ENCODE measurements at regions of chr9 and their contacts with region 1.

Region 1: DNA sequence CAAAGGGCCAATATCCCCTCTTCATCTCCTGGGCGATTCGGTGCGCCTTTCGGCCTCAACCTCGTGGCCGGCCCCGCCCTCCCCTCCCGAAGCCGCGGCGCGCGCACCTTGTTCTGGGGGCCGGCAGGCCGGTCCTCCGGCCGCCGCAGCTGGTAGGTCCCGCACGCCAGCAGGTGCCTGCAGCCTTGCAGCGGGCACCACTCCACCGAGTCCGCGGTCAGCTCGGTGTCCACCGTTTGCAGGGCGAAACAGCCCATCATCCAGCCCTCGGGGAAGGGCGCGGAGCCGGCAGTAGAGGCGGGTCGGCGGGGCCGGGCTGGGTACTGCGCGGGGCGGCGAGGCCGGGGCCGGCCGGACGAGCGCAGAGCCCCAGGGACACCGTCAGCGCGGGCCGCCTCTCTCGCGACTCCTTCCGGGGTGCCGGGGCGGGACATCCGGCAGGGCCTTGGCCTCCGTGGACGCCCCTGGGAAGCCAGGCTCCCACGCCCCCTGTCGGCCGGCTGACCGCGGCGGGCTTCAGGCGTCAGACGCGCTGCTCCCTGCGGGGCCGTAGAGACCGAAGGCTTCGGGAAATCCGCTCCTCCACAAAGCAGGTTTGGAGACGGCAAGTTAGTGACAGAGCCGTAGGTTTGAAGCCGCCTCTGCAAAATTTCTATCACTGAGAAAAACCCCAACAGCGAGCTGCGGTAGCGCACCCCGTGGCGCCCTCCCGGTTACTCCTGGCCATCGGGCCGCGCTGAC is at the start of gene DPH7:
- DNase-seq: peak; percentile 91 to 93
- ATAC-seq: peak; percentile 96 to 98
- H3K4me3 ChIP-seq: peak within 1 kb of the TSS; percentile 72
- H3K27ac ChIP-seq: peak within 1 kb of the TSS; percentile 91 to 97
- H3K4me1 ChIP-seq: peaks cover 12% of the 10 kb centered on the region; the same call in 2 of the 3 replicates
- CTCF ChIP-seq: peak; percentile 85
- EP300 ChIP-seq: no peak
- POLR2A ChIP-seq: peak; percentile 78
- RAD21 ChIP-seq: peak; percentile 14 to 36; a peak in 3 of 5 replicates
- polyA plus RNA-seq, gene DPH7: 26.7 and 28.2 TPM in 2 replicates

Region 2: GRCh38 chr9:137551651-137552384 is 26.9 kb before region 1 on chr9 and contains the start of gene MRPL41:
- CTCF ChIA-PET with region 1: interaction called, 14 read pairs
- POLR2A ChIA-PET with region 1: interaction called, 3 read pairs
- DNase-seq: peak; percentile 87 to 92
- ATAC-seq: peak; percentile 81 to 86
- H3K4me3 ChIP-seq: peak within 1 kb of the TSS; percentile 77
- H3K27ac ChIP-seq: peak within 1 kb of the TSS; percentile 93 to 96
- H3K4me1 ChIP-seq: peaks cover 15% of the 10 kb centered on the region
- CTCF ChIP-seq: no peak
- EP300 ChIP-seq: no peak
- POLR2A ChIP-seq: peak; percentile 78
- RAD21 ChIP-seq: no peak
- polyA plus RNA-seq, gene MRPL41: 19.2 and 19.7 TPM in 2 replicates

Region 3: DNA sequence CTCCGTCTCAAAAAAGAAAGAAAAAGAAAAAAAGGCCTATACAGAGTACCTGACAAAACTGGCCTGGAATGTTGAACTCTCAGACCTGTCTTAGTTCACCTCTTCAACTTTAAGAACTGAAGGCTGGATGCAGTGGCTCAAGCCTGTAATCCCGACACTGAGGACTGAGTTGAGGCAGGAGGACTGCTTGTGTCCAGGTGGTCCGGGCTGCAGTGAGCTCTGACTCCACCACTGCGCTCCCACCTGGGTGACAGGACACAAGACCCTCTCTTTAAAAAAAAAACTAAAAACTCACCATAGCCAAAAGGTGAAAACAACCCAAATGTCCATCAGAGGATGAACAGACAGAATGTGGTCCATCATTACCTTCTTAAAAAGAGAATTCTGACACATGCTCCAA is 20.6 kb before region 1 on chr9:
- CTCF ChIA-PET with region 1: interaction called, 14 read pairs
- POLR2A ChIA-PET with region 1: interaction called, 4 read pairs
- DNase-seq: no peak
- ATAC-seq: no peak
- H3K4me3 ChIP-seq: no peak overlapping the region
- H3K27ac ChIP-seq: no peak overlapping the region
- H3K4me1 ChIP-seq: peaks cover 3% of the 10 kb centered on the region; the same call in 2 of the 3 replicates
- CTCF ChIP-seq: no peak
- EP300 ChIP-seq: no peak
- POLR2A ChIP-seq: no peak
- RAD21 ChIP-seq: no peak

Region 4: GRCh38 chr9:137564817-137565411 is 13.8 kb before region 1 on chr9:
- CTCF ChIA-PET with region 1: interaction called, 11 read pairs
- POLR2A ChIA-PET with region 1: interaction called, 4 read pairs
- DNase-seq: no peak
- ATAC-seq: peak in 1 of 2 experiments; percentile 54; a peak in 2 of 6 replicates
- H3K4me3 ChIP-seq: no peak overlapping the region
- H3K27ac ChIP-seq: no peak overlapping the region
- H3K4me1 ChIP-seq: no peaks in the 10 kb centered on the region
- CTCF ChIP-seq: no peak
- EP300 ChIP-seq: no peak
- POLR2A ChIP-seq: no peak
- RAD21 ChIP-seq: no peak

Region 5: GRCh38 chr9:137590462-137591383 is 12.0 kb after region 1 on chr9 and contains the start of gene ZMYND19:
- CTCF ChIA-PET with region 1: interaction called, 175 read pairs
- POLR2A ChIA-PET with region 1: interaction called, 9 read pairs
- DNase-seq: peak; percentile 85 to 94
- ATAC-seq: peak; percentile 87 to 93
- H3K4me3 ChIP-seq: peak within 1 kb of the TSS; percentile 99
- H3K27ac ChIP-seq: peak within 1 kb of the TSS; percentile 94 to 95
- H3K4me1 ChIP-seq: peaks cover 15% of the 10 kb centered on the region; the same call in 1 of the 3 replicates
- CTCF ChIP-seq: no peak
- EP300 ChIP-seq: no peak
- POLR2A ChIP-seq: peak; percentile 58
- RAD21 ChIP-seq: no peak
- polyA plus RNA-seq, gene ZMYND19: 16.0 and 19.6 TPM in 2 replicates

Region 6: GRCh38 chr9:137611623-137612463 is 33.2 kb after region 1 on chr9:
- CTCF ChIA-PET with region 1: interaction called, 10 read pairs
- POLR2A ChIA-PET with region 1: no interaction called
- DNase-seq: peak; percentile 89 to 90
- ATAC-seq: peak; percentile 82 to 90
- H3K4me3 ChIP-seq: peak overlapping the region; percentile 1; the same call in 1 of the 3 replicates
- H3K27ac ChIP-seq: peak overlapping the region; percentile 81 to 88
- H3K4me1 ChIP-seq: peaks cover 40% of the 10 kb centered on the region
- CTCF ChIP-seq: no peak
- EP300 ChIP-seq: no peak
- POLR2A ChIP-seq: peak; percentile 48
- RAD21 ChIP-seq: no peak